Heart right ventricle (tissue), 16 donors: ENCODE measurements at regions of chr16 and their contacts with region 1.

Region 1: GRCh38 chr16:68328151-68328859 is 17.5 kb downstream of the PRMT7 start:
- DNase-seq: peak; percentile 64 to 72
- ATAC-seq: peak; percentile 85 to 95 (median 90)
- H3K4me3 ChIP-seq: no peak overlapping the region
- H3K27ac ChIP-seq: no peak overlapping the region
- H3K4me1 ChIP-seq: peaks cover 0 to 29% (median 18%) of the 10 kb centered on the region in 9 donors
- H3K27me3 ChIP-seq: no peaks in the 10 kb centered on the region
- CTCF ChIP-seq: peak; percentile 80 to 96 (median 93)

Region 2: GRCh38 chr16:68237243-68238028 is 90.9 kb before region 1 on chr16:
- intact Hi-C with region 1: loop called in 9 of 10 experiments (anchors 1 to 5 kb)
- DNase-seq: peak; percentile 97 to 98
- ATAC-seq: peak; percentile 90 to 96 (median 94)
- H3K4me3 ChIP-seq: peak overlapping the region; percentile 20 to 67 (median 60)
- H3K27ac ChIP-seq: peak overlapping the region; percentile 49 to 94 (median 88)
- H3K4me1 ChIP-seq: peaks cover 9 to 47% (median 30%) of the 10 kb centered on the region in 9 donors
- H3K27me3 ChIP-seq: peaks cover 0 to 16% (median 0%) of the 10 kb centered on the region in 7 donors
- CTCF ChIP-seq: peak in 2 of 9 donors; percentile 2 to 6

Region 3: DNA sequence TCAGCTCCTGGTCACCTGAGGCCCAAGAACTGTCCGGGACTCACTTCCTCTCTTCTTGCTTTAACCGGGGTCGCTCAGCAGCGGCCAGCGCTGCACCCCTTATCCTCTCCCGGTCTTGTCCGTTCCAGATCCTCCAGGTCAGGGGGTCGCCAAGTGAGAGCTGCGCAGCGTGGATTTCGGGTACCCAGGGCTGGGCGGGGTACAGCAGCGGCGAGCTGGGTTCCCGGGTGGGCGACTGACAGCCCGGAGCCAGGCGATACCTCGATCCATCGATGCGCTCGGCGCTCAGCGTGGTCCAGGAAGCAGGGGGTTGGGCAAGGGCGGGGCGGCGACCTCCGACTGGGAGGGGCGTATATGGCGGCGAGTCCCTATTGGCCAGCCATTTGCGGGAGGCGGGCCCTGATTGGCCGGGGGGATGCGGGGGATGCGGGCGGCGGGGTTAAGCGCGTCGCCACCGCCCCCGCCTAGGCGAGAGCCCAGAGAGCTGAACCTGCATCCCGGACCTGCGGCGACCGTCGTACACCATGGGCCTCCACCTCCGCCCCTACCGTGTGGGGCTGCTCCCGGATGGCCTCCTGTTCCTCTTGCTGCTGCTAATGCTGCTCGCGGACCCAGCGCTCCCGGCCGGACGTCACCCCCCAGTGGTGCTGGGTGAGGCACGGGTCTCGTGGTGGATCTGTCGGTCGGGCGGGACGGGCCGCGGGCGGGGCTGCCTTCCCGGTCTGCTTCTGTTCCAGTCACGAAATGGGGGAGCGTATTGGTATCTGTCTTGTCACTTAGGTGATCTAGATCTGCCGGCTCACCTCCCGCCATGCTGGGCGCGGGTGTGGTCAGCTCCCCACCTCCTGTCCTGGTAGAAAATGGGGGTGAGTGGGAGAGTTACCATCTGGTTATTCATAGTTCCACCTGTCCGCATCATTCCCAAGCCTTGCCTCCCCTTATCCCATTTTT is 83.1 kb before region 1 on chr16 and contains the start of gene PLA2G15:
- intact Hi-C with region 1: loop called in 8 of 10 experiments (anchors 1 to 5 kb)
- DNase-seq: peak; percentile 99
- ATAC-seq: peak; percentile 93 to 98 (median 96)
- H3K4me3 ChIP-seq: peak within 1 kb of the TSS; percentile 77 to 100 (median 87)
- H3K27ac ChIP-seq: peak within 1 kb of the TSS; percentile 8 to 95 (median 86)
- H3K4me1 ChIP-seq: peaks cover 10 to 56% (median 49%) of the 10 kb centered on the region in 9 donors
- H3K27me3 ChIP-seq: no peaks in the 10 kb centered on the region
- CTCF ChIP-seq: peak in 1 of 9 donors; percentile 6
- total RNA-seq, gene PLA2G15: 31.0 to 62.1 (median 44.0) TPM